ENCODE measurements at regions of chr12 and their contacts with region 1.

Region 1: GRCh38 chr12:122054842-122055520 is 23.6 kb upstream of the MLXIP start:
- DNase-seq: no peak
- H3K4me3 ChIP-seq: no peak overlapping the region
- H3K27ac ChIP-seq: no peak overlapping the region
- H3K4me1 ChIP-seq: peaks cover 0 to 36% (median 15%) of the 10 kb centered on the region in 4 donors
- H3K27me3 ChIP-seq: no peaks in the 10 kb centered on the region
- CTCF ChIP-seq: no peak

Region 2: GRCh38 chr12:122123051-122123760 is 68.2 kb after region 1 on chr12:
- intact Hi-C with region 1: loop called (anchors 2 kb)
- DNase-seq: peak in 1 of 2 donors; percentile 69
- H3K4me3 ChIP-seq: no peak overlapping the region
- H3K27ac ChIP-seq: no peak overlapping the region
- H3K4me1 ChIP-seq: peaks cover 0 to 34% (median 20%) of the 10 kb centered on the region in 4 donors
- H3K27me3 ChIP-seq: no peaks in the 10 kb centered on the region
- CTCF ChIP-seq: peak; percentile 70 to 90

Measured in tibial artery (tissue), 4 donors.